Activated CD8-positive, alpha-beta T cell treated with anti-CD3 and anti-CD28 coated beads, Interleukin-2, amount 10 ng/mL, durations not matched to agents 7 days and 5 days (primary cell): ENCODE measurements at regions of chr15 and their contacts with region 1.

Region 1: DNA sequence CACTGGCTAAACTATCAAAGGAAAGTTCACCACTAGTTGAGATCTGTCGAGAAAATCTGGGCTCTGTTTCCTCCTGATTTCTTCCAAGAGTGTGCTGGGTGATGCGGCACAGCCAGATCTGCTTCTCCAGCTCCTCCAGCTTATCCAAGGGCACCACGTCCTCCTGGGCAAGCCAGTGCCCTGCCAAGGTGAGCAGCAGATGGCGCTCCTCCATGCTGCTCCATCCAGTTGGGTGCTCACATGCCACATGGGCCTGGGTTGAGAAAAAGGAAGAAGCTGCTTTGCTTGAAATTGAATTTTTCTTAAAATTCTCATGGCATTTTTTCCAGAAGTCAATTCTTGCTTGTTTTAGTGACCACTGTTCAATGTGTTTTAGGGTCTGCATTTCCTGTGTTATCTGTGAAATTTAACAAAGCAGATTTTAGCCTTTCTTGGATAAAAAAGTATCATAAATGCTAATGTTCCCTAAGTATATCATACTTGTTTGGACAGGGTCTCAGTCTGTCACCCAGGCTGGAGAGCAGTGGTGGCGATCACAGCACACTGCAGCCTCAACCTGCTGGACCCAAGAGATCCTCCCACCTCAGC is 47.3 kb downstream of the EIF3J start:
- DNase-seq: peak; percentile 64
- ATAC-seq: peak; percentile 79
- H3K4me3 Mint-ChIP-seq: no peak overlapping the region
- H3K27ac Mint-ChIP-seq: no peak overlapping the region
- H3K4me1 Mint-ChIP-seq: peaks cover 2% of the 10 kb centered on the region
- H3K27me3 Mint-ChIP-seq: no peaks in the 10 kb centered on the region

Region 2: GRCh38 chr15:44598892-44599291 is 14.6 kb after region 1 on chr15:
- CTCF ChIA-PET with region 1: interaction called, 27 read pairs
- POLR2A ChIA-PET with region 1: interaction called, 3 read pairs
- DNase-seq: no peak
- ATAC-seq: no peak
- H3K4me3 Mint-ChIP-seq: no peak overlapping the region
- H3K27ac Mint-ChIP-seq: peak overlapping the region; percentile 73
- H3K4me1 Mint-ChIP-seq: peaks cover 31% of the 10 kb centered on the region
- H3K27me3 Mint-ChIP-seq: no peaks in the 10 kb centered on the region